ENCODE measurements at regions of chr7 and their contacts with region 1.

Region 1: GRCh38 chr7:7681179-7681935 is 37.0 kb downstream of the RPA3 start:
- DNase-seq: peak; percentile 88
- H3K4me3 ChIP-seq: no peak overlapping the region
- H3K27ac ChIP-seq: no peak overlapping the region
- H3K4me1 ChIP-seq: no peaks in the 10 kb centered on the region
- H3K27me3 ChIP-seq: no peaks in the 10 kb centered on the region
- CTCF ChIP-seq: peak; percentile 32 to 38
- POLR2A ChIP-seq: no peak

Region 2: GRCh38 chr7:7595451-7595850 is 85.9 kb before region 1 on chr7:
- CTCF ChIA-PET with region 1: interaction called, 12 read pairs
- POLR2A ChIA-PET with region 1: no interaction called
- dilution Hi-C with region 1: no loop called
- intact Hi-C with region 1: no loop called
- DNase-seq: peak; percentile 41
- H3K4me3 ChIP-seq: no peak overlapping the region
- H3K27ac ChIP-seq: no peak overlapping the region
- H3K4me1 ChIP-seq: no peaks in the 10 kb centered on the region
- H3K27me3 ChIP-seq: no peaks in the 10 kb centered on the region
- CTCF ChIP-seq: no peak
- POLR2A ChIP-seq: no peak

Region 3: DNA sequence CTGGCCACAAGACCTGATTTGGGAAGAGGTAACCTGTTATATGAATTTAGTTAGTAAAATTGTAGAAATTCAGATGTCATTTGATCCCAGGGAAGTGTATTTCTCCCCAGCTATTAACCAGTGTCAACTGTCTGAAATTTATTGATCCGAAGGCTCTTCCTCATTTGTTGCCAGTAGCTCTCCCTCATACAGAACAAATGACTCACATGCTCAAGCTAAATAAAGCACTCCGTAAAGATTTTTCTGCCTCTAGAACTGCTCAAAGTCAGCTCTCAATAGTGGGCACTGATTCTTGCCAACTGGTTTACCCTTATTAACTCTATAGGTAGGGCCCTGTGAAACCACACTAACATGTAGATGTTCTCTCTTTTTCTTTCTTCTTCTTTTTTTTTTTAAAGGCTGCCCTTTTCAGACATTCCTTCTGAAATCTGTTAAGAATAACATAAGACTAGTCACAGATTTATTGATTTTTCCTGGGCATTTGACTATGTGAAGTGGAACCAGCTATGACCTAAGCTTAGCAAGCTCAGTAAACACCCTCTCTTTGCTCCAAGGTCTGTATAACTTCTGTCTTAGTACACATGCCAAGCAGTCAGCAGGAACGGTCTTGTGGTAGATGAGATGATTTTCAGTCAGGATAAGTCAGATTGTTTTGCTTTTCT is 15.2 kb after region 1 on chr7:
- CTCF ChIA-PET with region 1: interaction called, 121 read pairs
- POLR2A ChIA-PET with region 1: no interaction called
- dilution Hi-C with region 1: no loop called
- intact Hi-C with region 1: no loop called
- DNase-seq: peak; percentile 23
- H3K4me3 ChIP-seq: no peak overlapping the region
- H3K27ac ChIP-seq: no peak overlapping the region
- H3K4me1 ChIP-seq: peaks cover 6% of the 10 kb centered on the region
- H3K27me3 ChIP-seq: no peaks in the 10 kb centered on the region
- CTCF ChIP-seq: no peak
- POLR2A ChIP-seq: no peak

Region 4: GRCh38 chr7:7719236-7719635 is 37.9 kb after region 1 on chr7:
- CTCF ChIA-PET with region 1: interaction called, 20 read pairs
- POLR2A ChIA-PET with region 1: no interaction called
- dilution Hi-C with region 1: no loop called
- intact Hi-C with region 1: no loop called
- DNase-seq: peak; percentile 42
- H3K4me3 ChIP-seq: no peak overlapping the region
- H3K27ac ChIP-seq: no peak overlapping the region
- H3K4me1 ChIP-seq: no peaks in the 10 kb centered on the region
- H3K27me3 ChIP-seq: no peaks in the 10 kb centered on the region
- CTCF ChIP-seq: no peak
- POLR2A ChIP-seq: no peak

Region 5: DNA sequence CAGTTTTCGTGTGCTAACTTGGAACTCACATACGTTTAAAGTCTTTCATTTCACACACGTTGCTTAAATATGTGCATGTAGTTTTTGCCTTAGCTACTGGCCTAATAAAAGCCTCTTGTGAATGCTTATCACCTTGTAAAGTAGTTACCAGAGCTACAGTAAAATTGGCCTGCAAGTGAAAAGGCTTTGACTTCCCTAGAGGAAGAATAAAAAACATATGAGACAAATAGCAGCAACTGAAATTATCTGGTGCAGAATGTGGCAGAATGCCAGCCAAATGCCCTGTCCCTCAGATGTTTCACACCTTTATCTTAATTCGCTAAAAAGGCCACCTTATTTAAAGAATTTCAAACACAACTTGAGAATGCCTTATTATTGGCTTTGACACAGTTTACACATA is 65.1 kb after region 1 on chr7:
- CTCF ChIA-PET with region 1: interaction called, 17 read pairs
- POLR2A ChIA-PET with region 1: no interaction called
- dilution Hi-C with region 1: no loop called
- intact Hi-C with region 1: no loop called
- DNase-seq: no peak
- H3K4me3 ChIP-seq: no peak overlapping the region
- H3K27ac ChIP-seq: no peak overlapping the region
- H3K4me1 ChIP-seq: no peaks in the 10 kb centered on the region
- H3K27me3 ChIP-seq: no peaks in the 10 kb centered on the region
- CTCF ChIP-seq: no peak
- POLR2A ChIP-seq: no peak

Region 6: GRCh38 chr7:7968543-7969305 is 287.4 kb after region 1 on chr7 and contains the start of gene GLCCI1:
- CTCF ChIA-PET with region 1: interaction called, 41 read pairs
- POLR2A ChIA-PET with region 1: no interaction called
- dilution Hi-C with region 1: no loop called
- intact Hi-C with region 1: loop called (anchors 1 kb)
- DNase-seq: peak; percentile 98
- H3K4me3 ChIP-seq: peak within 1 kb of the TSS; percentile 61 to 80 (median 70)
- H3K27ac ChIP-seq: no peak within 1 kb of the TSS
- H3K4me1 ChIP-seq: peaks cover 10% of the 10 kb centered on the region
- H3K27me3 ChIP-seq: no peaks in the 10 kb centered on the region
- CTCF ChIP-seq: no peak
- POLR2A ChIP-seq: peak; percentile 60
- total RNA-seq, gene GLCCI1: 5.1 and 5.6 TPM in 2 replicates

Region 7: GRCh38 chr7:8217200-8218068 is 536.1 kb after region 1 on chr7:
- CTCF ChIA-PET with region 1: interaction called, 43 read pairs
- POLR2A ChIA-PET with region 1: no interaction called
- dilution Hi-C with region 1: no loop called
- intact Hi-C with region 1: loop called (anchors 1 kb)
- DNase-seq: peak; percentile 67
- H3K4me3 ChIP-seq: no peak overlapping the region
- H3K27ac ChIP-seq: no peak overlapping the region
- H3K4me1 ChIP-seq: no peaks in the 10 kb centered on the region
- H3K27me3 ChIP-seq: no peaks in the 10 kb centered on the region
- CTCF ChIP-seq: peak; percentile 32 to 40
- POLR2A ChIP-seq: no peak

Region 8: GRCh38 chr7:8465338-8465737 is 784.0 kb after region 1 on chr7:
- CTCF ChIA-PET with region 1: no interaction called
- POLR2A ChIA-PET with region 1: no interaction called
- dilution Hi-C with region 1: no loop called
- intact Hi-C with region 1: no loop called
- DNase-seq: no peak
- H3K4me3 ChIP-seq: no peak overlapping the region
- H3K27ac ChIP-seq: no peak overlapping the region
- H3K4me1 ChIP-seq: no peaks in the 10 kb centered on the region
- H3K27me3 ChIP-seq: no peaks in the 10 kb centered on the region
- CTCF ChIP-seq: no peak
- POLR2A ChIP-seq: no peak

Measured in endothelial cell of umbilical vein (primary cell).